ENCODE measurements at regions of chr1 and their contacts with region 1.

Region 1: GRCh38 chr1:41745022-41745421 is 173.7 kb downstream of the HIVEP3 start:
- DNase-seq: no peak
- ATAC-seq: no peak
- H3K4me3 ChIP-seq: no peak overlapping the region
- H3K4me3 Mint-ChIP-seq: no peak overlapping the region
- H3K27ac ChIP-seq: no peak overlapping the region
- H3K27ac Mint-ChIP-seq: no peak overlapping the region
- H3K4me1 ChIP-seq: peaks cover 23% of the 10 kb centered on the region
- H3K4me1 Mint-ChIP-seq: peaks cover 27% of the 10 kb centered on the region
- H3K27me3 ChIP-seq: no peaks in the 10 kb centered on the region
- H3K27me3 Mint-ChIP-seq: no peaks in the 10 kb centered on the region
- CTCF ChIP-seq: no peak

Region 2: DNA sequence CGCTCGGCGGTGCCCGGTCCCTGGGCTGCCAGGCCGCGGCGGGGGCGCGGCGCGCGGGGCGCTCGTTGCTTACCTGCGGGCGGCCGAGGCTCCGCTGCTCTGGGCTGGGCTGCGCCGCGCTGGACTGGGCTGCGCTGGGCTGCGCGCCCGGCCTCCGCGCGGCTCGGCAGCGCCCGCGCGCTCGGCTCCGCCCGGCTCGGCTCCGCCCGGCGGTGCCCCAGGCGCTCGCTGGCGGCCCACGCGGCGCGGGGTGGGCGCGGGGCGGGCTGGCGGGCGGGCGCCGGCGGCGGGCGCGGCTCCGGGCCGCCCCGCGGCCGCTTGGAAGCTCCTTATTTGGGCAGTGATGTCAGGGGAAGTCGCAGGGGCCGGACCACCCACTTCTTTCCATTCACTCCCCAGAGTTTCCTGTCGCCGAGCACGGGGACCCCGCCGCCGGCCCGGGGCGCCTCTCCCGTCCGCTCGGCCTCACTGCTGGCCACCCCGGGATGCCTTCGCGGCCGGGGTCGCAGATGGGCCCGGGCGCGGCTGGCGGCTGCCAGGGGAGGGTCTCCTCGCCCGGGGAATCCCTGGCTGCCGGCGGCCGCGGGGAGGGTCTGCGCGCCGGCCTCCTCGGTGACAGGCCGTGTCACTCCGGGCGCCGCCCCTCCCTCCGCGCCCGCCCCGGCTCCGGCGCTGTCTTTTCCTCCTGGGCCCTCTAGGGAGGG is 82.8 kb before region 1 on chr1:
- CTCF ChIA-PET with region 1: no interaction called
- POLR2A ChIA-PET with region 1: no interaction called
- intact Hi-C with region 1: loop called in 1 of 2 experiments (anchors 5 kb)
- DNase-seq: peak; percentile 39 to 90 (median 60)
- ATAC-seq: peak; percentile 78
- H3K4me3 ChIP-seq: peak overlapping the region; percentile 69
- H3K4me3 Mint-ChIP-seq: peak overlapping the region; percentile 58
- H3K27ac ChIP-seq: peak overlapping the region; percentile 55 to 63
- H3K27ac Mint-ChIP-seq: no peak overlapping the region
- H3K4me1 ChIP-seq: peaks cover 91% of the 10 kb centered on the region
- H3K4me1 Mint-ChIP-seq: peaks cover 84% of the 10 kb centered on the region
- H3K27me3 ChIP-seq: no peaks in the 10 kb centered on the region
- H3K27me3 Mint-ChIP-seq: no peaks in the 10 kb centered on the region
- CTCF ChIP-seq: no peak

Region 3: DNA sequence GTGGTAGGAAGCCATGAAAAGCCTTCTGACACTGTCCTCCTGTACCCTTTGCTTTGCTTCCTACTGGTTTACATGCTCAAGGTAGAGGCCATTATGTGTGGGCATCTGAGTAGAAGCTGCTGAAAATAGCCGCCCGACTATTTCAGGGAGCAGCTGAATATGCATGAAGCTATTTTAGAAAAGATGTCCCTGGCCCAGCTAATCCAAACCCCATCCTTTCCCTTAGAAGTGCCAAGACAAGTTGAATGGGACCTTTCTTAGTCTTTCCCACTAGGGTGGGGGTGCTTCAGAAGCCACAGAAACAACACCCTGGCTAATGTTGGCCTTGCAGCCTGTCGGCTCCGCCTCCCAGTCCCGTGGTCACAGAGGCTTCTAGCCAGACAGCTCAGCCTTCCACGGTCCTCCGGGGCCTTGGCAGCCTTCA is 55.5 kb before region 1 on chr1:
- CTCF ChIA-PET with region 1: no interaction called
- POLR2A ChIA-PET with region 1: no interaction called
- intact Hi-C with region 1: no loop called
- DNase-seq: peak in 1 of 14 experiments; percentile 33
- ATAC-seq: no peak
- H3K4me3 ChIP-seq: no peak overlapping the region
- H3K4me3 Mint-ChIP-seq: no peak overlapping the region
- H3K27ac ChIP-seq: no peak overlapping the region
- H3K27ac Mint-ChIP-seq: no peak overlapping the region
- H3K4me1 ChIP-seq: peaks cover 21% of the 10 kb centered on the region
- H3K4me1 Mint-ChIP-seq: peaks cover 23% of the 10 kb centered on the region
- H3K27me3 ChIP-seq: no peaks in the 10 kb centered on the region
- H3K27me3 Mint-ChIP-seq: no peaks in the 10 kb centered on the region
- CTCF ChIP-seq: no peak

Region 4: GRCh38 chr1:41758904-41759548 is 14.0 kb after region 1 on chr1:
- CTCF ChIA-PET with region 1: no interaction called
- POLR2A ChIA-PET with region 1: no interaction called
- intact Hi-C with region 1: no loop called
- DNase-seq: peak in 1 of 14 experiments; percentile 38
- ATAC-seq: no peak
- H3K4me3 ChIP-seq: no peak overlapping the region
- H3K4me3 Mint-ChIP-seq: no peak overlapping the region
- H3K27ac ChIP-seq: no peak overlapping the region
- H3K27ac Mint-ChIP-seq: no peak overlapping the region
- H3K4me1 ChIP-seq: peaks cover 10% of the 10 kb centered on the region
- H3K4me1 Mint-ChIP-seq: peaks cover 13% of the 10 kb centered on the region
- H3K27me3 ChIP-seq: no peaks in the 10 kb centered on the region
- H3K27me3 Mint-ChIP-seq: no peaks in the 10 kb centered on the region
- CTCF ChIP-seq: no peak

Region 5: DNA sequence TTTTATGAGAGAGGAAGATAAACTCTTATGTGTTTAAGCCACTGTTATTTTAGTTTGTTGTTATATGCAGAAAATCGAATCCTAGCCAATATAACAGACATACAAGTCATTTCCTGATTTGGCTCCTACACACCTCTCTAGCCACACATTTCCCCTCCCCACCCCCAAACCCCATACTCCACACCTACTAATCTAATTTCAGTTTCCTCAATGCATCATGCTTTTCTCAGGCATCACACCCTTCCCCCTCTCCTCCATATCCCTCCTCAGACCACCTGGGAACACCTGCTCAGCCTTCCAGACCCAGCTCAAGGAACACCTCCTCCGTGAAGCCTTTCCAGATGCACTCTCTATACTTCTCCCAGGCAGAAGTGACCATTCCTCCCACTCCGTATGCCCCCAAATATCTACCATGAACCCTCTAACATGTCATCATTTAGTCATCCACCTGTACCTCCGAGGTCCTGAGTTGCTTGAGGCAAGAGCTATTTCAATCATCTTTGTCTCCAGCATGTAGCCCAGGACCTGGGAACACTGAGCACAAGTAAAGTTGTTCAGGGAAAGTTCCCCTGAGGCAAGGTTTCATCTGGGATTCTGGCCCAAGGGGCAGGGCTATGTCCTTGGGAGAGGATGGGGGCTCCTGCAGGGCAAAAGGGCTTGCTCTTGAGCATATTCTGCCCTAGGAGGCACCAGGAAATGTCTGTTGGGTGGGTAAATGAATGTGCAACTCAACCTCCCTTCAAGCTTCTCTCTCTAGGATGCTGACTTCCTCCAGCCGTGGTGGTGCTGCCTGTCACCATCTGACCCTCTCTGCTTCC is 46.9 kb after region 1 on chr1:
- CTCF ChIA-PET with region 1: no interaction called
- POLR2A ChIA-PET with region 1: no interaction called
- intact Hi-C with region 1: no loop called
- DNase-seq: peak in 3 of 14 experiments; percentile 14 to 72 (median 50)
- ATAC-seq: no peak
- H3K4me3 ChIP-seq: no peak overlapping the region
- H3K4me3 Mint-ChIP-seq: peak overlapping the region; percentile 7
- H3K27ac ChIP-seq: no peak overlapping the region
- H3K27ac Mint-ChIP-seq: no peak overlapping the region
- H3K4me1 ChIP-seq: peaks cover 39% of the 10 kb centered on the region
- H3K4me1 Mint-ChIP-seq: peaks cover 30% of the 10 kb centered on the region
- H3K27me3 ChIP-seq: no peaks in the 10 kb centered on the region
- H3K27me3 Mint-ChIP-seq: no peaks in the 10 kb centered on the region
- CTCF ChIP-seq: no peak

Region 6: GRCh38 chr1:41868599-41868998 is 123.6 kb after region 1 on chr1:
- CTCF ChIA-PET with region 1: no interaction called
- POLR2A ChIA-PET with region 1: no interaction called
- intact Hi-C with region 1: no loop called
- DNase-seq: peak in 4 of 14 experiments; percentile 14 to 58 (median 54)
- ATAC-seq: peak; percentile 37
- H3K4me3 ChIP-seq: no peak overlapping the region
- H3K4me3 Mint-ChIP-seq: no peak overlapping the region
- H3K27ac ChIP-seq: no peak overlapping the region
- H3K27ac Mint-ChIP-seq: no peak overlapping the region
- H3K4me1 ChIP-seq: peaks cover 20% of the 10 kb centered on the region
- H3K4me1 Mint-ChIP-seq: peaks cover 11% of the 10 kb centered on the region
- H3K27me3 ChIP-seq: no peaks in the 10 kb centered on the region
- H3K27me3 Mint-ChIP-seq: no peaks in the 10 kb centered on the region
- CTCF ChIP-seq: no peak

Measured in CD4-positive, alpha-beta T cell (primary cell).